Naive thymus-derived CD4-positive, alpha-beta T cell (primary cell): ENCODE measurements at regions of chr7 and their contacts with region 1.

Region 1: DNA sequence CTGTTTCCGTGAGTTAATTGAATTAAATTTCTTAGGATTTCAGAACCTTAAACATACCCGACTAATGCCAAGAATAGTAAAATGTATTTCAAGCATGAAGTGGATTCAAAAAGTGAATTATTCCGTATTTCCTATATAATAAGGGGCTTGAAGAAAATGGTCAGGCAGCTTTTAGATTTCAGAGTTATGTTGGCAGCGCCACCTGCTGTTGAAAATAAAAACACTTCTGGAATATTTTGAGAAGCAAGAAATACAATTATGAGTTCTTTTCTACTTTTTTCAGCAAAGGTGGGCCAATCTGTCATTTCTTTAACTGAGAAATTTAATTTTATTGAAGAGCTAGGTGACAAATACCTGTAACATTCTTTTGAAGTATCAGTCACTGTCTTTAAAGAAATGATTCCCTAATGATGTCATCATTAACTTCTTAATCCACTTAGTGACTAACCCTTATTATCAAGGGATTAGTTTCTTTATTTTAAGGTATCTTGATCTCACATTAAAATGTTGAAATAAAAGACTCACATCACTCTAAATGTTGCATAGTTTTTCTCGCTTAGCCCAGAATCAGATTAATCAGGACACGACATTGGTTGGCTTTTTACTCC is 36.6 kb upstream of the AGR3 start:
- DNase-seq: peak in 3 of 9 donors; percentile 13 to 35 (median 25)
- ATAC-seq: no peak
- H3K4me3 ChIP-seq: no peak overlapping the region
- H3K4me3 Mint-ChIP-seq: no peak overlapping the region
- H3K27ac ChIP-seq: no peak overlapping the region
- H3K27ac Mint-ChIP-seq: no peak overlapping the region
- H3K4me1 ChIP-seq: peaks cover 0 to 4% of the 10 kb centered on the region in 2 donors
- H3K4me1 Mint-ChIP-seq: peaks cover 0 to 17% (median 7%) of the 10 kb centered on the region in 7 donors
- H3K27me3 ChIP-seq: no peaks in the 10 kb centered on the region
- H3K27me3 Mint-ChIP-seq: peaks cover 0 to 7% (median 0%) of the 10 kb centered on the region in 5 donors

Region 2: GRCh38 chr7:16078076-16078952 is 840.1 kb before region 1 on chr7:
- CTCF ChIA-PET with region 1: no interaction called
- POLR2A ChIA-PET with region 1: no interaction called
- intact Hi-C with region 1: loop called (anchors 2 to 5 kb)
- DNase-seq: peak in 7 of 9 donors; percentile 4 to 29 (median 19)
- ATAC-seq: no peak
- H3K4me3 ChIP-seq: no peak overlapping the region
- H3K4me3 Mint-ChIP-seq: no peak overlapping the region
- H3K27ac ChIP-seq: no peak overlapping the region
- H3K27ac Mint-ChIP-seq: no peak overlapping the region
- H3K4me1 ChIP-seq: no peaks in the 10 kb centered on the region
- H3K4me1 Mint-ChIP-seq: peaks cover 0 to 10% (median 0%) of the 10 kb centered on the region in 7 donors
- H3K27me3 ChIP-seq: no peaks in the 10 kb centered on the region
- H3K27me3 Mint-ChIP-seq: no peaks in the 10 kb centered on the region

Region 3: GRCh38 chr7:16431646-16432424 is 486.6 kb before region 1 on chr7:
- CTCF ChIA-PET with region 1: no interaction called
- POLR2A ChIA-PET with region 1: no interaction called
- intact Hi-C with region 1: loop called (anchors 1 to 2 kb)
- DNase-seq: peak in 7 of 9 donors; percentile 20 to 50 (median 31)
- ATAC-seq: peak; percentile 81
- H3K4me3 ChIP-seq: no peak overlapping the region
- H3K4me3 Mint-ChIP-seq: no peak overlapping the region
- H3K27ac ChIP-seq: no peak overlapping the region
- H3K27ac Mint-ChIP-seq: no peak overlapping the region
- H3K4me1 ChIP-seq: no peaks in the 10 kb centered on the region
- H3K4me1 Mint-ChIP-seq: peaks cover 0 to 6% (median 0%) of the 10 kb centered on the region in 7 donors
- H3K27me3 ChIP-seq: no peaks in the 10 kb centered on the region
- H3K27me3 Mint-ChIP-seq: peaks cover 0 to 16% (median 3%) of the 10 kb centered on the region in 5 donors

Region 4: DNA sequence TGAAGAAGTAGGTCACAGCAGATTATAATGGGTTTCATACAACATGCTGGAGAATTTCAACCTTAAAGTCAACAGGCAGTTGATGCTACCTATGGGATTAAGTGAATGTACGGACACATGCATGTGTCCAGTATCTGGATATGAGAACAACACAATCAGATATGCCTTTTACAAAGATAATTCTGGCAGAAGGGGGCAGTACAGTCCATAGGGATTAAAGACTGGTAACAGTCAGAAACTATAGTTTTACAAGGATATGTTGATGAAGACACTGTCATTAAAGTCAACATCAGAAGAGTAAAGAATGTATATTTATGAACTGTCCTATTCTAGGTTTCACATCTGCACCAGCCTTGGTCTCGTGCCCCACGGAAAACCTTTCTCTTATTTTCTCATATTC is 314.3 kb before region 1 on chr7:
- CTCF ChIA-PET with region 1: no interaction called
- POLR2A ChIA-PET with region 1: no interaction called
- intact Hi-C with region 1: loop called in 1 of 2 experiments (anchors 5 kb)
- DNase-seq: peak in 1 of 9 donors; percentile 8
- ATAC-seq: no peak
- H3K4me3 ChIP-seq: no peak overlapping the region
- H3K4me3 Mint-ChIP-seq: no peak overlapping the region
- H3K27ac ChIP-seq: no peak overlapping the region
- H3K27ac Mint-ChIP-seq: no peak overlapping the region
- H3K4me1 ChIP-seq: no peaks in the 10 kb centered on the region
- H3K4me1 Mint-ChIP-seq: no peaks in the 10 kb centered on the region
- H3K27me3 ChIP-seq: no peaks in the 10 kb centered on the region
- H3K27me3 Mint-ChIP-seq: no peaks in the 10 kb centered on the region

Region 5: GRCh38 chr7:16695621-16696237 is 222.7 kb before region 1 on chr7:
- CTCF ChIA-PET with region 1: no interaction called
- POLR2A ChIA-PET with region 1: no interaction called
- intact Hi-C with region 1: loop called (anchors 1 kb)
- DNase-seq: no peak
- ATAC-seq: no peak
- H3K4me3 ChIP-seq: no peak overlapping the region
- H3K4me3 Mint-ChIP-seq: no peak overlapping the region
- H3K27ac ChIP-seq: no peak overlapping the region
- H3K27ac Mint-ChIP-seq: peak overlapping the region in 1 of 9 donors; percentile 51
- H3K4me1 ChIP-seq: no peaks in the 10 kb centered on the region
- H3K4me1 Mint-ChIP-seq: peaks cover 0 to 2% (median 0%) of the 10 kb centered on the region in 7 donors
- H3K27me3 ChIP-seq: no peaks in the 10 kb centered on the region
- H3K27me3 Mint-ChIP-seq: no peaks in the 10 kb centered on the region

Region 6: GRCh38 chr7:16801111-16801542 is 117.3 kb before region 1 on chr7:
- CTCF ChIA-PET with region 1: no interaction called
- POLR2A ChIA-PET with region 1: no interaction called
- intact Hi-C with region 1: loop called (anchors 1 kb)
- DNase-seq: no peak
- ATAC-seq: peak; percentile 44
- H3K4me3 ChIP-seq: no peak overlapping the region
- H3K4me3 Mint-ChIP-seq: no peak overlapping the region
- H3K27ac ChIP-seq: no peak overlapping the region
- H3K27ac Mint-ChIP-seq: no peak overlapping the region
- H3K4me1 ChIP-seq: no peaks in the 10 kb centered on the region
- H3K4me1 Mint-ChIP-seq: no peaks in the 10 kb centered on the region
- H3K27me3 ChIP-seq: no peaks in the 10 kb centered on the region
- H3K27me3 Mint-ChIP-seq: peaks cover 3 to 13% (median 4%) of the 10 kb centered on the region in 5 donors

Region 7: DNA sequence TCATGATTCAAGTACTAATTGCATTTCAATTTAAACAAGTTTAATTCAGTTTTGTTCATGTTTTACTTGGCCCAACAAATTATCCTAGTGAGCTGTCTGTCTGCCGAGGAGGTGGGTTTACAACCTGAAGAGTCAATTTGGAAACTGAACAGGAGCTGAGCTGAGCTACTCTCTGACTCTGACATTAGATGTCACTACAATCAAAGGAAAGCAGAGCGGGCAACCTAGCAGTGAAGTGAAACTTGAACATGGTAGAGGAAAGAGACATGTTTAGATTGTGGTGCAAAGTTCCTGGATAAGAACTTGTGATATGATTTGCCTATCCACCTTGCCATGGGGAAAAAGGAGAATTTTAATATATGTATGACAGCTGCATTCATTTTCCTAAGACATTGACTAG is 27.1 kb before region 1 on chr7:
- CTCF ChIA-PET with region 1: interaction called, 4 read pairs
- POLR2A ChIA-PET with region 1: no interaction called
- intact Hi-C with region 1: loop called (anchors 1 to 2 kb)
- DNase-seq: peak in 6 of 9 donors; percentile 1 to 35 (median 28)
- ATAC-seq: peak; percentile 63
- H3K4me3 ChIP-seq: no peak overlapping the region
- H3K4me3 Mint-ChIP-seq: peak overlapping the region in 1 of 10 donors; percentile 6
- H3K27ac ChIP-seq: no peak overlapping the region
- H3K27ac Mint-ChIP-seq: no peak overlapping the region
- H3K4me1 ChIP-seq: no peaks in the 10 kb centered on the region
- H3K4me1 Mint-ChIP-seq: peaks cover 0 to 11% (median 0%) of the 10 kb centered on the region in 7 donors
- H3K27me3 ChIP-seq: no peaks in the 10 kb centered on the region
- H3K27me3 Mint-ChIP-seq: peaks cover 0 to 8% (median 2%) of the 10 kb centered on the region in 5 donors

Region 8: DNA sequence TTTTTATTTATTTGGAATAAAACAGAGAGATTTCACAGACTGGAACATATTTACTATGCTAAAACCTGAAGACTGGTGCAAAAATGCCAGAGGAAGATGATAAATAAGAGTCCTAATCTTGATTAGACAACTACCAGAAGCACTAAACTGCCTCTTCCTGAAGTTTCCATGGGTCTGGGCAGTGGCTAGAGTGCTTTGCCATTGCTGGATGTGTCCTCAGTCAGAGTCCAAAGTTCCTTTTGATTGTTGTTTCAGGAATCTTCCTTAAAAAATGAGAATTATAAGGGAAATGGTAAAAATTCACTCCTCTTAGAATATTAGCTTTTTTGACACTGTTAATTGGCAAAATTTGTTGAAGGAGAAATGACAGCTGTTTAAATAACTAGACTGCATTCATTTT is 293.8 kb after region 1 on chr7:
- CTCF ChIA-PET with region 1: no interaction called
- POLR2A ChIA-PET with region 1: no interaction called
- intact Hi-C with region 1: no loop called
- DNase-seq: no peak
- ATAC-seq: no peak
- H3K4me3 ChIP-seq: no peak overlapping the region
- H3K4me3 Mint-ChIP-seq: no peak overlapping the region
- H3K27ac ChIP-seq: no peak overlapping the region
- H3K27ac Mint-ChIP-seq: no peak overlapping the region
- H3K4me1 ChIP-seq: no peaks in the 10 kb centered on the region
- H3K4me1 Mint-ChIP-seq: peaks cover 0 to 2% (median 0%) of the 10 kb centered on the region in 7 donors
- H3K27me3 ChIP-seq: no peaks in the 10 kb centered on the region
- H3K27me3 Mint-ChIP-seq: peaks cover 0 to 2% (median 0%) of the 10 kb centered on the region in 5 donors